T-cell (primary cell): ENCODE measurements at regions of chr3 and their contacts with region 1.

Region 1: DNA sequence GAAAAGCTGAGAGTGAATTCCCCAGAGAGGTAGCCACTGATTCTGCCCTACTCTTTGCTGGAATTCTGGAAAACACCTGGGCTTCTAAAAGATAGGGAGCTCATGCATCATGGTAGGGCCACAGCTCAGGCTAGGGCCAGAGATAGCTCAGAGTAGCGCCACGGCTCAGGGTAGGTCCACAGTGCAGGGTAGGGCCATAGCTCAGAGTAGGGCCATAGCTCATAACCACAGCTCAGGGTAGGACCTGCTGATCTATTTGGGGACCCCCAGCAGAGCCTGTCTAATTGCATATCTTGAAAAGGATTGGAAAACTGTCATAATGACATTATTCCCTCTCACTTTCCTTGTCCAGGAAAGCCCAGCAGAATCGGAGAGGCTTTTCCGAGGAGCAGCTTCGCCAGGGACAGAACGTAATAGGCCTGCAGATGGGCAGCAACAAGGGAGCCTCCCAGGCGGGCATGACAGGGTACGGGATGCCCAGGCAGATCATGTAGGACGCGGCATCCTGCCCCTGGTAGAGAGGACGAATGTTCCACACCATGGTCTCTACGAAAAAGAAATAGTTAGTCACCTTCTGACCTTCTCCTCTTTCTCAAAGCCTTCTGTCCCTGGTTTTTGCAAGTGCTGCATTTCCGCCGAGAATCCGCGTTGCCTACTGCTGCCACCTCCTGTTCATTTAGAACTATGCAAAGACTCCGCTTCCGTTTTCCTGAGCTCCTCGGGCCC is 14.5 kb downstream of the TAGLN3 start:
- DNase-seq: peak in 34 of 35 experiments; percentile 4 to 74 (median 41)
- ATAC-seq: peak; percentile 75 to 83 (median 78)
- H3K4me3 ChIP-seq: no peak overlapping the region
- H3K4me3 Mint-ChIP-seq: no peak overlapping the region
- H3K27ac ChIP-seq: no peak overlapping the region
- H3K27ac Mint-ChIP-seq: no peak overlapping the region
- H3K4me1 ChIP-seq: peaks cover 0 to 6% of the 10 kb centered on the region in 2 experiments
- H3K4me1 Mint-ChIP-seq: peaks cover 0 to 12% (median 7%) of the 10 kb centered on the region in 3 donors
- H3K27me3 ChIP-seq: no peaks in the 10 kb centered on the region
- H3K27me3 Mint-ChIP-seq: no peaks in the 10 kb centered on the region

Region 2: DNA sequence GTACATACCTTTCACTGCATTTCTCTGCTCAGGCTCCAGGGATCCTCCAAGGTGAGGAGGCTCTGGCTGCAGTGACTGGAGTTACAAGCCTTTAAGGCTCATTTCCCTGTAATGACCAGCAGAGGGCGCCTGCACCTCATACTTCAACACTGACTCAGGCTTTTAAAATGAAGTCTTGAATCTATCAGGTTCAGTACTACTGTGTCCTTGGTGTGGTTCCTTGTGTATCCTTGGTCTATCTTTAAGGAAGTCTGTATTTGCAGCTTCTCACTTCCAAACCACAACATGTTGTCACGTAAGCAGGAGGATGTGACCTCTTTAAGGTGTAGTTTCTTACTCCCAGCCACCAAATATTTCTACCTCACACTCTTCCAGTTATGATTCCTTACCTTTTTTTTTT is 295.6 kb before region 1 on chr3:
- CTCF ChIA-PET with region 1: interaction called, 36 to 56 read pairs
- POLR2A ChIA-PET with region 1: no interaction called
- DNase-seq: peak; percentile 39 to 84 (median 56)
- ATAC-seq: peak; percentile 87 to 89 (median 88)
- H3K4me3 ChIP-seq: no peak overlapping the region
- H3K4me3 Mint-ChIP-seq: no peak overlapping the region
- H3K27ac ChIP-seq: no peak overlapping the region
- H3K27ac Mint-ChIP-seq: peak overlapping the region; percentile 36 to 85
- H3K4me1 ChIP-seq: peaks cover 0 to 4% of the 10 kb centered on the region in 2 experiments
- H3K4me1 Mint-ChIP-seq: peaks cover 0 to 10% (median 4%) of the 10 kb centered on the region in 3 donors
- H3K27me3 ChIP-seq: no peaks in the 10 kb centered on the region
- H3K27me3 Mint-ChIP-seq: no peaks in the 10 kb centered on the region

Region 3: DNA sequence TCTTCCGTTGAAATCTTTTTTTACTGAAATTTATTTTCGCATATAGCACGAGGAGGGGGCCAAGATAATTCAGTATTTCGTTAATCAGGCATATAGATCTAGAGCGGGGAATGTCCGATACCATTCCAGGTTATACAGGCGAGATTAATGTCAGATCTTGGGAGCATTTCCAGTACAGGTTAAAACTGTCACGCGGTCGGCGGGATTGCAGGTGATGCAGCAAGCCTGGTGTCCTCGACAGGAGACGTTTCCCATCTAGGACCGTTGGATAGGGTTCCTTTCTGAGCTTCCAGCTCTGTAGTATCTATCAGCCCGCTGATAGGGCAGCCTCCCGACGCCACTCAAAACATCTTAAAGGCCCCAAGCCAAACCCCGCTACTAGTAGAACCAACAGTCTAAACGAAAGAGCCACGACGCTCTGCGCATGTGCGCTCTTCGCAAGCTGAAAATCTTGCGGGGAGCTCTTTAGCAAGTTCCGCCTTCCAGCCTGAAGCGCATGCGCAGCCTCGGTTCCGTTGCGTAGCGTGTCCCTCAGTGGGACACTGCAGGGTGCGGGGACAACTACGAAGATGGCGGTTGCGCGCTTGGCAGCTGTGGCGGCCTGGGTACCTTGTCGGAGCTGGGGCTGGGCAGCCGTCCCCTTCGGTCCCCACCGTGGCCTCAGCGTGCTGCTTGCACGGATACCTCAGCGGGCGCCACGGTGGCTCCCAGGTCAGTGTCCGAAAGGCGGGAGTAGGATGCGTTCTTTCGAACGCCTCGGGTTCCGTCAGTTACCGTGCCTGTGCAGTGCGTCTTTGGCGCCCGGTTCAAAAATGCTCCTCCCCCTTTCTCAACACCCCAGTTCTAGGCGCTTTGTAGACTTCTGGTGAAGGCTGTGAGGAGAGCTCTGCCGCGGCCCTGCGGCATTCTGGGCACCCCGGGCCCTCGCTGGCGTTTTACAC is 34.5 kb before region 1 on chr3 and contains the start of gene ABHD10:
- CTCF ChIA-PET with region 1: interaction called, 7 to 28 read pairs
- POLR2A ChIA-PET with region 1: interaction called, 4 to 7 read pairs
- DNase-seq: peak; percentile 88 to 100 (median 96)
- ATAC-seq: peak; percentile 96 to 97 (median 96)
- H3K4me3 ChIP-seq: peak within 1 kb of the TSS; percentile 73 to 96
- H3K4me3 Mint-ChIP-seq: peak within 1 kb of the TSS; percentile 91 to 94 (median 92)
- H3K27ac ChIP-seq: peak within 1 kb of the TSS; percentile 74
- H3K27ac Mint-ChIP-seq: peak within 1 kb of the TSS; percentile 89 to 92
- H3K4me1 ChIP-seq: peaks cover 9 to 10% of the 10 kb centered on the region in 2 experiments
- H3K4me1 Mint-ChIP-seq: peaks cover 46 to 48% (median 46%) of the 10 kb centered on the region in 3 donors
- H3K27me3 ChIP-seq: no peaks in the 10 kb centered on the region
- H3K27me3 Mint-ChIP-seq: no peaks in the 10 kb centered on the region
- total RNA-seq, gene ABHD10: 18.3 to 31.8 (median 28.1) TPM

Region 4: GRCh38 chr3:111989061-111989678 is 24.1 kb before region 1 on chr3:
- CTCF ChIA-PET with region 1: interaction called, 17 to 44 read pairs
- POLR2A ChIA-PET with region 1: interaction called in 1 of 2 experiments, 3 read pairs
- DNase-seq: peak in 1 of 35 experiments; percentile 61
- ATAC-seq: peak; percentile 57 to 79 (median 72)
- H3K4me3 ChIP-seq: no peak overlapping the region
- H3K4me3 Mint-ChIP-seq: no peak overlapping the region
- H3K27ac ChIP-seq: no peak overlapping the region
- H3K27ac Mint-ChIP-seq: no peak overlapping the region
- H3K4me1 ChIP-seq: peaks cover 0 to 9% of the 10 kb centered on the region in 2 experiments
- H3K4me1 Mint-ChIP-seq: peaks cover 31 to 36% (median 33%) of the 10 kb centered on the region in 3 donors
- H3K27me3 ChIP-seq: no peaks in the 10 kb centered on the region
- H3K27me3 Mint-ChIP-seq: no peaks in the 10 kb centered on the region

Region 5: DNA sequence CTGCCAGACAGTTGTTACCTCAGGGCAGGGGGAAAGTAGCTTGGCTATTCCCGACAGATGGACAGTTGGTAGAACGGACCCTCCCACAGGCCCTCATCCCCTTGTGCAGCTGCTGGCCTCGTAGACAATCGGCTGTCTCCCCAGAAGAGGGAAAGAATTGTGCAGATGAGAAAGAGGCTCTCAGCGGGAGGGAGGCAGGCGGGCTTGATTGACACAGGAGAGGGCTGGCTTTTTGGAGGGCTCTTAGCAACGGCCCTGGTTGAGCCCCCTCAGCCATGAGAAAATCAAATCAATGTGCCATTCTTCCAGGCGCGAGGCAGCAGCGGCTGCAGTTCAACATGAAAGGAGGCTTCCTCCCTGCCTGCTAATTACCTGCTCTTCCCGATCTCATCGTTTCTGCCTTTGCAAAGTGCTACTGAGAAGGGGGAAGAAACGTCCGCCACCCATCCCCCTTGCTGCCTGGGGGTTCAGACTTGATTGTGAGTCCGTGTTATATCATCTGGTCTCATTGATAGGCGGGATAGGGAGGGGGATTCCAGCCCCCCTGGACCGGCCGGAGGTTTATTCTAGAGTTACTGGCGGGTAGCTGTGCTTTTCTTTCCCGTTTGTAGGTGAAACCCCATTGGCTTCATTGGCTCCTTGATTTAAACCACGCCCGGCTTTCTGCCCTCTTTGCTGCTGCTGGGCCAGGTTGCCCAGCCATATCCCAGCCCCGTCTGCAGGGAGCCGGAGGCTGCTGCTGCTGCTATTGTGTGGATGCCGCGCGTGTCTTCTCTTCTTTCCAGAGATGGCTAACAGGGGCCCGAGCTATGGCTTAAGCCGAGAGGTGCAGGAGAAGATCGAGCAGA is 14.4 kb before region 1 on chr3 and contains the start of gene TAGLN3:
- CTCF ChIA-PET with region 1: interaction called, 9 to 21 read pairs
- POLR2A ChIA-PET with region 1: no interaction called
- DNase-seq: peak in 2 of 35 experiments; percentile 0 to 19
- ATAC-seq: peak; percentile 28 to 62 (median 36)
- H3K4me3 ChIP-seq: peak within 1 kb of the TSS in 1 of 2 donors; percentile 80
- H3K4me3 Mint-ChIP-seq: peak within 1 kb of the TSS; percentile 69 to 77 (median 72)
- H3K27ac ChIP-seq: no peak within 1 kb of the TSS
- H3K27ac Mint-ChIP-seq: no peak within 1 kb of the TSS
- H3K4me1 ChIP-seq: peaks cover 21 to 29% of the 10 kb centered on the region in 2 experiments
- H3K4me1 Mint-ChIP-seq: peaks cover 28 to 35% (median 34%) of the 10 kb centered on the region in 3 donors
- H3K27me3 ChIP-seq: peaks cover 0 to 10% of the 10 kb centered on the region in 2 experiments
- H3K27me3 Mint-ChIP-seq: peaks cover 1 to 4% of the 10 kb centered on the region in 2 donors
- total RNA-seq, gene TAGLN3: not detected